HEK293T (cell line): ENCODE measurements at regions of chr5 and their contacts with region 1.

Region 1: DNA sequence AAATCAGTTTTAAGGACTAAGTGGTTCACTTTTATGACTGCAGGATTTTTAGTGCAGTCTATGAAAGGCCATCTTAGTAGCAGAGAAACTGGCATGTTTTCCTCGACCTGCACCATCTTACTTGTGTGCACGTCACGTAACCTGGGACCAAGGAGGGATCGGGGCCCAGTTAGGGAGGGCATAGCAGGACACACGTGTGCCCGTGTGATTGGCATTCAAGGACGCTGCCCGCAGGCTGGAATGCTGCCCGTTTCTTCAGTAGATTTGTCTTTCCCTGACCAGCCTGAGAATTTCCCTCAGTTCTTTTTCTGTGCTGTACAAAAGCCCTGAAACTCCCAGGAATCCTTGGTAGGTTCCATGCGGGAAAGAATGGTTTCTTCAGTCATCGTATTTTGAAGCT is 196.3 kb downstream of the TRIO start:
- DNase-seq: no peak

Region 2: GRCh38 chr5:14351845-14352712 is 12.6 kb after region 1 on chr5:
- CTCF ChIA-PET with region 1: interaction called, 26 read pairs
- POLR2A ChIA-PET with region 1: no interaction called
- DNase-seq: peak; percentile 79

Region 3: DNA sequence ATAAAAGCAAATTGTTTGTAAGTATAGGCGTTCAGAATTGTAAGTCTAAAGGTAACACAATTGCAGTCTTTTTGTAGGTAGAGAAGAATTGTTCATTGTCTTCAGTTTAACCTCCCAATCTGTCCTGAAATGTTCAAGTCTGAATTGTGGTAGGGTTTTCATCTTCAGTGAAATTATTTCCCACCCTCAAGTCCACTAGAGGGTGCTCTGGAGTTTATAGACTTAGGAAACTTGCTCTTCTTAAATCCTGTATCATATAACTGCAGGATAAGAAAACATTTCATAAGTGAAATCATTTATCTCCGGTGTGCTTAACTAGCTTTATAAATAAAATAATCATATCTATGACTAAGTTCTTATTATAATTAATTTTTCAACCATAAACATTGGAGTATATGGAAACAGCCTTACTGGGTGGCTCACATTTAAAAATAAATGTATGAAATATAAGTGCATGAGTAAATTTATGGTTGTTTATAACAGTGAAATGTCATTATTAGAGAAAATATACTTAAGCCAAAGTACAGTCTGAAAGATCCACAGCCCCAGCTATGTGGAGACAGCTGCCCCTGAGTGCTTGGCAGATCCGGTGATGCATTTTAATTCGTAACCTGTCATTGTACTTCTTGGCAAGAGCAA is 59.7 kb after region 1 on chr5:
- CTCF ChIA-PET with region 1: no interaction called
- POLR2A ChIA-PET with region 1: no interaction called
- DNase-seq: peak; percentile 35